HCT116 (cell line): ENCODE measurements at regions of chr6 and their contacts with region 1.

Region 1: DNA sequence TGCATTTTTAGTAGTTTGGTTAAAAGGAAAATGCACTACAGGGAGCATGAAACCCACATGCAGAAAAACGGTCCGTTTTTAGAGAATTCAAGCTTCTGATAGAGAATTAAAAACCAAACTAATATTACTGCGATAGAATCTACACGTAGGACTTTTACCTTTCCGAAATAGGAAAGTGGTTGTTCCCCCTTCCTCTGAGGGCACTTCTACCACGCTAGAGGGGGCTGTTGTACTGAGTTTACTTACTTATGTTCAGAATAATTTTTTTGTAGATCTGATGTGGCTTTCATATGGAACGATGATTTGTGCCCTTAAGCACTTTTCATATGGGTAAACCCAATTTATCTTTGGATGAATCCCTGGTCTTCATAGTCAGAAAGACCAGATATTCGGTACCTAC is 264.3 kb upstream of the PLN start:
- DNase-seq: peak; percentile 55
- ATAC-seq: peak; percentile 79
- H3K4me3 ChIP-seq: no peak overlapping the region
- H3K27ac ChIP-seq: no peak overlapping the region
- H3K4me1 ChIP-seq: no peaks in the 10 kb centered on the region
- H3K27me3 ChIP-seq: no peaks in the 10 kb centered on the region
- CTCF ChIP-seq: peak; percentile 68 to 78 (median 78)
- POLR2A ChIP-seq: no peak
- RAD21 ChIP-seq: peak; percentile 84

Region 2: GRCh38 chr6:117733341-117733740 is 550.4 kb before region 1 on chr6:
- CTCF ChIA-PET with region 1: no interaction called
- POLR2A ChIA-PET with region 1: no interaction called
- RAD21 ChIA-PET with region 1: no interaction called
- intact Hi-C with region 1: no loop called
- DNase-seq: no peak
- ATAC-seq: no peak
- H3K4me3 ChIP-seq: no peak overlapping the region
- H3K27ac ChIP-seq: no peak overlapping the region
- H3K4me1 ChIP-seq: peaks cover 0 to 6% of the 10 kb centered on the region in 2 experiments; a peak in 2 of 4 replicates
- H3K27me3 ChIP-seq: no peaks in the 10 kb centered on the region
- CTCF ChIP-seq: no peak
- POLR2A ChIP-seq: no peak
- RAD21 ChIP-seq: no peak

Region 3: GRCh38 chr6:118401325-118401975 is 117.7 kb after region 1 on chr6:
- CTCF ChIA-PET with region 1: no interaction called
- POLR2A ChIA-PET with region 1: no interaction called
- RAD21 ChIA-PET with region 1: no interaction called
- intact Hi-C with region 1: no loop called
- DNase-seq: no peak
- ATAC-seq: no peak
- H3K4me3 ChIP-seq: no peak overlapping the region
- H3K27ac ChIP-seq: no peak overlapping the region
- H3K4me1 ChIP-seq: no peaks in the 10 kb centered on the region
- H3K27me3 ChIP-seq: no peaks in the 10 kb centered on the region
- CTCF ChIP-seq: no peak
- POLR2A ChIP-seq: no peak
- RAD21 ChIP-seq: no peak

Region 4: GRCh38 chr6:118509009-118509617 is 225.3 kb after region 1 on chr6:
- CTCF ChIA-PET with region 1: interaction called, 4 read pairs
- POLR2A ChIA-PET with region 1: no interaction called
- RAD21 ChIA-PET with region 1: no interaction called
- intact Hi-C with region 1: loop called (anchors 1 kb)
- DNase-seq: peak; percentile 35
- ATAC-seq: peak; percentile 58; the same call in 1 of the 2 replicates
- H3K4me3 ChIP-seq: no peak overlapping the region
- H3K27ac ChIP-seq: no peak overlapping the region
- H3K4me1 ChIP-seq: no peaks in the 10 kb centered on the region
- H3K27me3 ChIP-seq: no peaks in the 10 kb centered on the region
- CTCF ChIP-seq: peak; percentile 73 to 78 (median 76)
- POLR2A ChIP-seq: no peak
- RAD21 ChIP-seq: peak; percentile 83

Region 5: GRCh38 chr6:118580585-118581419 is 297.0 kb after region 1 on chr6:
- CTCF ChIA-PET with region 1: interaction called, 9 read pairs
- POLR2A ChIA-PET with region 1: no interaction called
- RAD21 ChIA-PET with region 1: no interaction called
- intact Hi-C with region 1: loop called (anchors 1 kb)
- DNase-seq: peak; percentile 49
- ATAC-seq: peak; percentile 95
- H3K4me3 ChIP-seq: no peak overlapping the region
- H3K27ac ChIP-seq: no peak overlapping the region
- H3K4me1 ChIP-seq: no peaks in the 10 kb centered on the region
- H3K27me3 ChIP-seq: no peaks in the 10 kb centered on the region
- CTCF ChIP-seq: peak; percentile 57 to 69 (median 59); a peak in 5 of 6 replicates
- POLR2A ChIP-seq: no peak
- RAD21 ChIP-seq: peak; percentile 78

Region 6: GRCh38 chr6:118709859-118710350 is 426.1 kb after region 1 on chr6:
- CTCF ChIA-PET with region 1: no interaction called
- POLR2A ChIA-PET with region 1: no interaction called
- RAD21 ChIA-PET with region 1: no interaction called
- intact Hi-C with region 1: no loop called
- DNase-seq: no peak
- ATAC-seq: no peak
- H3K4me3 ChIP-seq: no peak overlapping the region
- H3K27ac ChIP-seq: no peak overlapping the region
- H3K4me1 ChIP-seq: no peaks in the 10 kb centered on the region
- H3K27me3 ChIP-seq: no peaks in the 10 kb centered on the region
- CTCF ChIP-seq: no peak
- POLR2A ChIP-seq: no peak
- RAD21 ChIP-seq: no peak

Region 7: DNA sequence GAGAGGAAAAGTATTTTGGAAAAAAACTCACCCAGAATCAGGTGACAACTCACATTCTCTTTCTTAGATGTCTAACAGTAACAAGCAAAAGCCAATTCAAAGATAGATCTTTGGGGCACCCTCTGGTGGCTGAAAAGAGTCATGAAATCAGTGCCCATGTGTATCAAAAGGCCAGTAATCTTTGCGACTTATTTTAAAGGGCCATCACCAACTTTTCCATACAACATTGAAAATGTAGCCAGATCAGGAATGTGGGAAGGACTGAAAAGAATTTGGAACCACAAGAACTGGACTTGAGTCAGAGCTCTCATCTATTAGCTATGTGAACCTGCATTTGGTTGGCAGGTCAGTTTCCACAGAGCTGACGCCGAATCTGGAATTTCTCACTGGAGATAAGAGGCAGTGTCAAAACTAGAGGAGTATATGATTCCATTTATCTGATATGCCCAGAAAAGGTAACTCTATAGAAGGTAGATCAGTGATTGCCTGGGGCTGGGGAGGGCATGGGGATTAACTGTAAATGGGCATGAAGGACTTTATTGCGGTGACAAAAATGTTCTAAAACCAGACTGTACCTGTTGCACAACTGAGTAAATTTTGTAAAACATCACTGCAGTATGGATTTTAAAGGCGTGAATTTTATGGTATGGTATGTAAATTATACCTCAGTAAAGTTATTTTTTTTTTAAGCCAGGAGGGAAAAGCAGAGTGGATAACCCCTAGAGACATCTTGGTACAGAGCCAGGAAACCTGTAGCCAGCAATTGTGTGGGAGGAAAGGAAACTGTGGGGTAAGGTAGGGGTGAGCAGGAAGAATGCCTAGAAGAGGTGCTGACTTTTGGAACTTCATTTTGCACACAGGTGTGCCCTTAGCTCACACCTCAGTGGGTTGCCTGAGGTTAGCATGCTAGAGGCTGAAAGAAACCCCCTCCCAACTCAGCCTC is 493.1 kb after region 1 on chr6:
- CTCF ChIA-PET with region 1: no interaction called
- POLR2A ChIA-PET with region 1: no interaction called
- RAD21 ChIA-PET with region 1: interaction called in 1 of 2 experiments, 7 read pairs
- intact Hi-C with region 1: loop called (anchors 2 kb)
- DNase-seq: peak; percentile 57
- ATAC-seq: peak; percentile 96
- H3K4me3 ChIP-seq: no peak overlapping the region
- H3K27ac ChIP-seq: no peak overlapping the region
- H3K4me1 ChIP-seq: peaks cover 8% of the 10 kb centered on the region in 2 experiments; a peak in 2 of 4 replicates
- H3K27me3 ChIP-seq: no peaks in the 10 kb centered on the region
- CTCF ChIP-seq: peak; percentile 59 to 84 (median 81); a peak in 5 of 6 replicates
- POLR2A ChIP-seq: no peak
- RAD21 ChIP-seq: peak; percentile 66

Region 8: GRCh38 chr6:119110601-119111548 is 827.1 kb after region 1 on chr6:
- CTCF ChIA-PET with region 1: interaction called, 3 read pairs
- POLR2A ChIA-PET with region 1: no interaction called
- RAD21 ChIA-PET with region 1: no interaction called
- intact Hi-C with region 1: loop called (anchors 5 kb)
- DNase-seq: peak; percentile 44
- ATAC-seq: peak; percentile 96
- H3K4me3 ChIP-seq: no peak overlapping the region
- H3K27ac ChIP-seq: no peak overlapping the region
- H3K4me1 ChIP-seq: no peaks in the 10 kb centered on the region
- H3K27me3 ChIP-seq: no peaks in the 10 kb centered on the region
- CTCF ChIP-seq: peak; percentile 41 to 76 (median 65); a peak in 5 of 6 replicates
- POLR2A ChIP-seq: no peak
- RAD21 ChIP-seq: peak; percentile 91